ENCODE measurements at regions of chr15 and their contacts with region 1.

Region 1: GRCh38 chr15:29239395-29239794 is 30.2 kb downstream of the NSMCE3 start:
- DNase-seq: no peak
- ATAC-seq: no peak
- H3K4me3 ChIP-seq: no peak overlapping the region
- H3K4me3 Mint-ChIP-seq: no peak overlapping the region
- H3K27ac ChIP-seq: no peak overlapping the region
- H3K27ac Mint-ChIP-seq: no peak overlapping the region
- H3K4me1 ChIP-seq: no peaks in the 10 kb centered on the region
- H3K4me1 Mint-ChIP-seq: no peaks in the 10 kb centered on the region
- H3K27me3 ChIP-seq: no peaks in the 10 kb centered on the region
- H3K27me3 Mint-ChIP-seq: peaks cover 8% of the 10 kb centered on the region
- CTCF ChIP-seq: no peak

Region 2: GRCh38 chr15:29278436-29279105 is 39.2 kb after region 1 on chr15:
- CTCF ChIA-PET with region 1: no interaction called
- POLR2A ChIA-PET with region 1: no interaction called
- intact Hi-C with region 1: loop called in 1 of 2 experiments (anchors 5 kb)
- DNase-seq: no peak
- ATAC-seq: no peak
- H3K4me3 ChIP-seq: no peak overlapping the region
- H3K4me3 Mint-ChIP-seq: no peak overlapping the region
- H3K27ac ChIP-seq: no peak overlapping the region
- H3K27ac Mint-ChIP-seq: no peak overlapping the region
- H3K4me1 ChIP-seq: no peaks in the 10 kb centered on the region
- H3K4me1 Mint-ChIP-seq: no peaks in the 10 kb centered on the region
- H3K27me3 ChIP-seq: peaks cover 6 to 12% of the 10 kb centered on the region in 2 experiments
- H3K27me3 Mint-ChIP-seq: peaks cover 25% of the 10 kb centered on the region
- CTCF ChIP-seq: no peak

Region 3: DNA sequence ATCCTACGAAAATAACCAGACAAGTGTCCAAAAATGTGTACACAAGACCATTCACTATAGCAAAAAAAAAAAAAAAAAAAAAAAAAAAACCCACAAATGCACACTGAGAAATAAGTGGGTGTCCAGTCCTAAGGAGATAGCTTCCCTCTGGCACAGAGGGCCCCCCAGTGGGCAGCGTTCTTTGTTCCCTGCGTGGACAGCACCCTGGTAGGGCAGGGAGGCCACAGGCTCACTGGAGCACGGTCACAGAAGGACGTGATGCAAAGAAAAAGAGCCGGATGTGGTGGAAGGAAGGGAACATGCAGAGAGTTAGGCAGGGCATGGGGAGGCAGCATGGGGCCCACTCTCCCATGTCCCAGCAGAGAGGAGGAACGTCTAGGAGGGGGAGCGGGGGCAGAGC is 240.9 kb after region 1 on chr15:
- CTCF ChIA-PET with region 1: no interaction called
- POLR2A ChIA-PET with region 1: no interaction called
- intact Hi-C with region 1: no loop called
- DNase-seq: no peak
- ATAC-seq: no peak
- H3K4me3 ChIP-seq: no peak overlapping the region
- H3K4me3 Mint-ChIP-seq: no peak overlapping the region
- H3K27ac ChIP-seq: no peak overlapping the region
- H3K27ac Mint-ChIP-seq: no peak overlapping the region
- H3K4me1 ChIP-seq: no peaks in the 10 kb centered on the region
- H3K4me1 Mint-ChIP-seq: no peaks in the 10 kb centered on the region
- H3K27me3 ChIP-seq: peaks cover 0 to 5% of the 10 kb centered on the region in 2 experiments
- H3K27me3 Mint-ChIP-seq: peaks cover 33% of the 10 kb centered on the region
- CTCF ChIP-seq: no peak

Measured in CD4-positive, alpha-beta T cell (primary cell).